ENCODE measurements at regions of chr11 and their contacts with region 1.

Region 1: GRCh38 chr11:83285771-83286528 is at the start of gene CCDC90B:
- DNase-seq: peak; percentile 97
- H3K4me3 Mint-ChIP-seq: peak within 1 kb of the TSS; percentile 97
- H3K27ac Mint-ChIP-seq: peak within 1 kb of the TSS; percentile 98
- H3K4me1 Mint-ChIP-seq: peaks cover 28% of the 10 kb centered on the region
- H3K27me3 Mint-ChIP-seq: no peaks in the 10 kb centered on the region
- total RNA-seq, gene CCDC90B: 28.2 to 29.5 TPM

Region 2: DNA sequence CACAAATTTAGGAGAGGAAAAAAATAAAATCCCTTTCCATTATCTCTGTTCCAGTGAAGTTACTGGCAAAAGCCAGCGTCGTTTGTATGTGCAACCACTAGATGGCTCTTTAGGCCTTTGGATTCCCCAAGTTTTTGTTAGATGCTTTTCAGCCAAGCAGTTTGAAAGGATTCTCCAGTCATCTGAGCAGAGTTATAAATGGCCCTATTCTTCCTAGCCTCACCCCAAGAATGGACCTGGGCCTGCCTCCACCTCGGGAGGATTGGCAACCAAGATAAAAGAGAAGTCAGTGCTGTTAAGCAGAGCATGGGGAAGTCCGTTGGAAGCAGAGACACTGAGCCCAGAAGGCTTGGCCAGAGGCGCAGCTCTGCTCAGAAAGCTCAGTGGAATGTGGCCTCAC is 567.6 kb before region 1 on chr11:
- CTCF ChIA-PET with region 1: no interaction called
- intact Hi-C with region 1: loop called (anchors 5 kb)
- DNase-seq: peak; percentile 44
- H3K4me3 Mint-ChIP-seq: no peak overlapping the region
- H3K27ac Mint-ChIP-seq: no peak overlapping the region
- H3K4me1 Mint-ChIP-seq: peaks cover 4% of the 10 kb centered on the region
- H3K27me3 Mint-ChIP-seq: no peaks in the 10 kb centered on the region

Region 3: GRCh38 chr11:83007909-83008580 is 277.9 kb before region 1 on chr11:
- CTCF ChIA-PET with region 1: interaction called, 3 read pairs
- intact Hi-C with region 1: loop called (anchors 5 kb)
- DNase-seq: no peak
- H3K4me3 Mint-ChIP-seq: no peak overlapping the region
- H3K27ac Mint-ChIP-seq: no peak overlapping the region
- H3K4me1 Mint-ChIP-seq: peaks cover 50% of the 10 kb centered on the region
- H3K27me3 Mint-ChIP-seq: no peaks in the 10 kb centered on the region

Region 4: GRCh38 chr11:83087035-83087434 is 198.9 kb before region 1 on chr11:
- CTCF ChIA-PET with region 1: no interaction called
- intact Hi-C with region 1: loop called (anchors 1 kb)
- DNase-seq: no peak
- H3K4me3 Mint-ChIP-seq: no peak overlapping the region
- H3K27ac Mint-ChIP-seq: no peak overlapping the region
- H3K4me1 Mint-ChIP-seq: peaks cover 14% of the 10 kb centered on the region
- H3K27me3 Mint-ChIP-seq: no peaks in the 10 kb centered on the region

Region 5: GRCh38 chr11:83156150-83156995 is 129.6 kb before region 1 on chr11:
- CTCF ChIA-PET with region 1: no interaction called
- intact Hi-C with region 1: loop called (anchors 1 kb)
- DNase-seq: peak; percentile 99
- H3K4me3 Mint-ChIP-seq: peak overlapping the region; percentile 98
- H3K27ac Mint-ChIP-seq: peak overlapping the region; percentile 100
- H3K4me1 Mint-ChIP-seq: peaks cover 26% of the 10 kb centered on the region
- H3K27me3 Mint-ChIP-seq: no peaks in the 10 kb centered on the region

Region 6: DNA sequence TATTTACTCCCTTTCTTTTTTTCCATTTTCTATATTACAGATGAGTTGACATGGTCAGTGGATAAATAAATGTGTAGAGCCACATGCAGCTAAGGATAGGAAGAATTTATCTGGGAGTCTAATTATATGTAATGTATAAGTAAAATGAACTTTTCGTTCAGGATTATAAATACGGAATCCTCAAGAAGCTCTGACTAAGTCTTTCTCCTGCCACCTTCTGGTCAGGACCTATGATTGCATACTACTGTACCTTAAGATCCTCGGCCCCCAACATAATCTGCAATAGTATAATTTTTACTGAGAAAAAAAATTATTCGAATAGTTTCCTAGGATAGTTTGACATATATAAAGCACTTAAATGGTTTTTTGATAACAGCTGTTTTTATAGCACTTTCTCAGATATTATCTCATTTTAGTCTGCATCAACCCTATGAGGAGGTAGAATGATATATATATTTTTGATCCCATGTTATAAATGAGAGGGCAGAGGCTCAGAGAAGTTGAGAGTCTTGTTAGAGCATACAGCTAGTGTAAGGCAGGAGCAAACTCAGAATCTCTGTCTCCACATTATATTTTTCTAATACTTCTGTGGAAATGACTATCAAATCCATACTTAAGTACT is 35.9 kb before region 1 on chr11:
- CTCF ChIA-PET with region 1: interaction called, 3 read pairs
- intact Hi-C with region 1: loop called (anchors 1 kb)
- DNase-seq: peak; percentile 30
- H3K4me3 Mint-ChIP-seq: no peak overlapping the region
- H3K27ac Mint-ChIP-seq: no peak overlapping the region
- H3K4me1 Mint-ChIP-seq: no peaks in the 10 kb centered on the region
- H3K27me3 Mint-ChIP-seq: no peaks in the 10 kb centered on the region

Measured in activated naive CD4-positive, alpha-beta T cell treated with anti-CD3 and anti-CD28 coated beads for 36 hours (primary cell).